ENCODE measurements at regions of chr16 and their contacts with region 1.

Region 1: DNA sequence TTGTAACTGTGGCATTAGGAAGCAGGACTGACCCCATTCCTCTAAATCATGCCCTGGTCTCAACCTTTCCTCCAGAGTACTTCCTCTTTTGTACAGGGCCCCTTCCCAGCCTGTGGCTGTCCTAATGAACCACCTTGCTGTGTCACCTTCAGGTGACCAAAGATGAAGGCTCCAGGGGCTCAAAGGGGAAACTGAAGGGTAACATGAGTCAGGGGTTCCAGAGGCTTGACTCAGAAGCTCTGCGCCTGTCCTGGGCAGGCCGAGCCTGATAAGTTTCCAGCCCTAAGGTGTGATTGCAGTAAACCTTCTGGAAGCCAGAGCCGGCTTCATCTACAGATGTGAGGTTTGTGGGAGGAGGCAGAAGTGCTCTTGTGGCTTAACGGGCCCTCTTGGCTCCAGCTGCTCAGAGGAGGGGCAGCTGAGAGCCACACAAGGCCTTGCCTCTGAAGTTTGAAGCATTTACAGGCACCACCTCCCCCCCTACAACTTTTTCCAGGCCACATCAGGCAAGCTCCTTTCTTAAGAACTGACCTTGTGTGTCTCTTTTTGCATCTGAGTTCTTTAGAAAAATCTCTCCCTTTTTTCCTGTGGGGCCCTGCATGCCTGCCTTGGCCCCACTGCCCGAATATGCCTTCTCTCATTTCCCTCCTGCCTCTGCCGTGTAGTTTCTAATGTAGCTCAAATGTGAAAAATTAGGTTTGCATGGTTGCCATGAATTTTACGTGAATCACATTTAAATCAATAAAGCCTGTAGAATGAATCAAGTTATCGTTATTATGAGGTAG is 149.9 kb downstream of the CLEC16A start:
- DNase-seq: peak; percentile 89
- H3K4me3 Mint-ChIP-seq: peak overlapping the region; percentile 71
- H3K27ac Mint-ChIP-seq: peak overlapping the region; percentile 98
- H3K4me1 Mint-ChIP-seq: peaks cover 66% of the 10 kb centered on the region
- H3K27me3 Mint-ChIP-seq: no peaks in the 10 kb centered on the region

Region 2: DNA sequence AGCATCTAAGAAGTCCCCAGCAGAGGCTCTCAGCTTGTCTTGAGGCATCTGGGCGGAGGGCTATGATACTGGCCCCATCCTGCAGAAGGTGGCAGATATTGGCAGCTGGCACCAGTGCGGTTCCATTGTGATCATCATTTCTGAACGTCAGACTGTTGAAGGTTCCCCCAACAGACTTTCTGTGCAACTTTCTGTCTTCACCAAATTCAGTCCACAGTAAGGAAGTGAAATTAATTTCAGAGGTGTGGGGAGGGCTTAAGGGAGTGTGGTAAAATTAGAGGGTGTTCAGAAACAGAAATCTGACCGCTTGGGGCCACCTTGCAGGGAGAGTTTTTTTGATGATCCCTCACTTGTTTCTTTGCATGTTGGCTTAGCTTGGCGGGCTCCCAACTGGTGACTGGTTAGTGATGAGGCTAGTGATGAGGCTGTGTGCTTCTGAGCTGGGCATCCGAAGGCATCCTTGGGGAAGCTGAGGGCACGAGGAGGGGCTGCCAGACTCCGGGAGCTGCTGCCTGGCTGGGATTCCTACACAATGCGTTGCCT is 217.4 kb before region 1 on chr16 and contains the start of gene CIITA:
- intact Hi-C with region 1: no loop called
- DNase-seq: peak; percentile 86
- H3K4me3 Mint-ChIP-seq: peak within 1 kb of the TSS; percentile 95
- H3K27ac Mint-ChIP-seq: peak within 1 kb of the TSS; percentile 43
- H3K4me1 Mint-ChIP-seq: peaks cover 70% of the 10 kb centered on the region
- H3K27me3 Mint-ChIP-seq: peaks cover 41% of the 10 kb centered on the region
- total RNA-seq, gene CIITA: 5.0 and 6.4 TPM in 2 replicates

Region 3: DNA sequence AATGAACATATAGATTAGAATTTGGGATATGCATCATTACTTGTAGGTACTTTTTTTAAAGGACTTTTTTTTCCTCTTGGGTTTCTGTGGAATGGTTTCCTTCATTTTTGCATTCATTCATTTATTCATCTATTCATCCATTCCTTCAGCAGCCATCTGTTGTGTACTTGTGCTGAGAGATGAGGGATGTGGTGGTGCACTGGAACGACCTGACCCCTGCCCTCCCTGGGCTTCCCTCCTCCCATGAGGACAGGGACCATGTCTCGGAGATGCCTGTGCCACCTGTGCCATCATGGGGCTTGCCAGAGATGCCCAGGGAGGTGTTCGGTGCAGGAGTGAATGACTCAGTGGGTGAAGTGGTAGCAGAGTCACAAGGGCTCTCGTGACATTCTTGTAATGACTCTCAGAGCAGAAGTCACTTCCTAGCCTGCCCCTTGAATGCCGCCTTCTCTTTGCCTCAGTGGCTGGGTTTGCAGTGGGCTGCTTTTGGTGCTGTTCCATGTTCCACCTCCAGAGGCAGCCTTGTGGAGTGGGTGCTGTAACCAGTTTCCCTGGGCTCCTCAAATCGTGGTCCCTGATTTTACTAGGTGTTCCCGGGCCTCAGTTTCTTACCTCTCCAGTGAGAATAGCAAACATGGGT is 106.0 kb before region 1 on chr16:
- intact Hi-C with region 1: loop called (anchors 1 kb)
- DNase-seq: peak; percentile 89
- H3K4me3 Mint-ChIP-seq: peak overlapping the region; percentile 66
- H3K27ac Mint-ChIP-seq: peak overlapping the region; percentile 92
- H3K4me1 Mint-ChIP-seq: peaks cover 79% of the 10 kb centered on the region
- H3K27me3 Mint-ChIP-seq: no peaks in the 10 kb centered on the region

Region 4: DNA sequence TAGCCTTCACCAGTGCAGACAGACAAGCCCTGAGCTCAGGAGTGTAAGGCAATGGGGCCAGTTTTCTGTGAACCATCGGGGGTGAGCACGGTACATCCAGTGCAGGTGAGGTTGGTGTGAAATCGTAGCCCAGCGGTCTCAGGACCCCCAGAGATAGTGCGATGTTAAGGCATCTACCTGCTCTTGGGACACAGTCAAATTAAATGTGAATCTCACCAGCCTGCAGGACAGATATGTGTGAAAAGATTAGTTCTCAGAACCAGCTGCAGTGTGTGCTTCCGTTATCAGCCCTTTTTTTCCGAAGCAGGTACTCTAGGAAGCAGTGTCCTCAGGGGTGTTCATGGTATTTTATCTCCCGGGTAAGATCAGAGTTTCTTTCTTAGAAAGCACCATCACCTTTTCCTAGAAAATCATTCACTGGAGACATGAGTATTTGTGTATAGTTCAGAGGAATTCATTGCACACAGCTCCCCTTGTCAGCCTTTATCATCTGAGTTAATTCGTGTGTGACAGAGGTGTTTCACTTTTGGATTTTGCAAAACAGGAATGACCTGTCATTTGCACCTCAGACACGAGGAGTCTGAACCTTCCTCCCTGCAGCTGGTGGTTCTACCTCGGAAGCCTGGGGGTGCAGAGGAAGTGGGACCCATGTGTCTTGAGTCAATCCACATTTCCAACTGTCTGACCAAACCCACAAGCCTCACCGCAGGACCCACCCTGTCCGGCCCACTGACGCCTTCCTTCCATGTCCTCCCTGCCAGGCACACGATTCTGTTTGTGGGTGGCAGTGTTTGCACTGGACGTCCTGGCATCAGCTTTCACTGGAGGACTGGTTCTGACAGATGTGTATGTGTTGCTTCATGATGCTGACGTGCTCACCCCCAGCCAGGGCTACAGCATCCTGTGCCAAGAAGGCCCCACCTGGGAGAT is 42.1 kb before region 1 on chr16:
- intact Hi-C with region 1: loop called (anchors 1 kb)
- DNase-seq: peak; percentile 93
- H3K4me3 Mint-ChIP-seq: peak overlapping the region; percentile 46
- H3K27ac Mint-ChIP-seq: peak overlapping the region; percentile 89
- H3K4me1 Mint-ChIP-seq: peaks cover 77% of the 10 kb centered on the region
- H3K27me3 Mint-ChIP-seq: no peaks in the 10 kb centered on the region

Region 5: GRCh38 chr16:11105038-11105903 is 11.0 kb after region 1 on chr16:
- intact Hi-C with region 1: loop called (anchors 1 kb)
- DNase-seq: peak; percentile 84
- H3K4me3 Mint-ChIP-seq: peak overlapping the region; percentile 73
- H3K27ac Mint-ChIP-seq: peak overlapping the region; percentile 92
- H3K4me1 Mint-ChIP-seq: peaks cover 65% of the 10 kb centered on the region
- H3K27me3 Mint-ChIP-seq: no peaks in the 10 kb centered on the region

Region 6: DNA sequence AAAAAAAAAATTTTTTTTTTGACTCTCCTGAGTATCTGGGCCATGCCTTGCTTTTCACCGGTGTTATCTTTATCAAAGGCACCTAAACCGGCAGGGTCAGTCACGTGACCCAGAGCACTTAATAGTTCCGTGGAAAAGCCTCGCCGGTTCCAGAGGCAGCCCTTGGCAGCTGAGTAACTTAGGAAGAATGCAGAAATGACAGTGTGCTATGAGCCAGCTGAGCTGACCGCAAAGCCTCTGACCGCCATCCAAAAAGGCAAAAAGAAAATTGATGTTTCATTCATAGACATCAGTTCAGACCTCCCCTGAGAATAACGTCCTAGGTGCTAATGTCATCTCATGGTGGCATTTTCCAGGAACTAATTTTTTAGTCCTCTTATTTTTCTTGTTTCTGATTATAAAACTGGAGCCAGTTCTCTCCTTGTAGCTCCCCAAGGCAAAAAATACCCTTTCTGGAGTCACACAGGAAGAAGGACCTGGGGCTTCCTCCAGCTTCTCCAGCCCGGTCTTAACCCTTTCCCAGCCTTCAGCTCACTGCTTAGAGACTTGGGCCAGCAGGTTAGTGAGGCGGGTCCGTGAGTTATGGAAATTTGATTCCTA is 39.2 kb after region 1 on chr16:
- intact Hi-C with region 1: no loop called
- DNase-seq: peak; percentile 67
- H3K4me3 Mint-ChIP-seq: no peak overlapping the region
- H3K27ac Mint-ChIP-seq: peak overlapping the region; percentile 8
- H3K4me1 Mint-ChIP-seq: peaks cover 58% of the 10 kb centered on the region
- H3K27me3 Mint-ChIP-seq: no peaks in the 10 kb centered on the region

Region 7: GRCh38 chr16:11224096-11224893 is 130.0 kb after region 1 on chr16:
- intact Hi-C with region 1: loop called (anchors 1 kb)
- DNase-seq: peak; percentile 92
- H3K4me3 Mint-ChIP-seq: peak overlapping the region; percentile 86
- H3K27ac Mint-ChIP-seq: peak overlapping the region; percentile 100
- H3K4me1 Mint-ChIP-seq: peaks cover 56% of the 10 kb centered on the region
- H3K27me3 Mint-ChIP-seq: no peaks in the 10 kb centered on the region

Measured in activated CD4-positive, alpha-beta T cell treated with anti-CD3 and anti-CD28 coated beads, Interleukin-2, amount 10 ng/mL, durations not matched to agents 24 days and 14 days (primary cell).